IMR-90 (cell line): ENCODE measurements at regions of chr6 and their contacts with region 1.

Region 1: DNA sequence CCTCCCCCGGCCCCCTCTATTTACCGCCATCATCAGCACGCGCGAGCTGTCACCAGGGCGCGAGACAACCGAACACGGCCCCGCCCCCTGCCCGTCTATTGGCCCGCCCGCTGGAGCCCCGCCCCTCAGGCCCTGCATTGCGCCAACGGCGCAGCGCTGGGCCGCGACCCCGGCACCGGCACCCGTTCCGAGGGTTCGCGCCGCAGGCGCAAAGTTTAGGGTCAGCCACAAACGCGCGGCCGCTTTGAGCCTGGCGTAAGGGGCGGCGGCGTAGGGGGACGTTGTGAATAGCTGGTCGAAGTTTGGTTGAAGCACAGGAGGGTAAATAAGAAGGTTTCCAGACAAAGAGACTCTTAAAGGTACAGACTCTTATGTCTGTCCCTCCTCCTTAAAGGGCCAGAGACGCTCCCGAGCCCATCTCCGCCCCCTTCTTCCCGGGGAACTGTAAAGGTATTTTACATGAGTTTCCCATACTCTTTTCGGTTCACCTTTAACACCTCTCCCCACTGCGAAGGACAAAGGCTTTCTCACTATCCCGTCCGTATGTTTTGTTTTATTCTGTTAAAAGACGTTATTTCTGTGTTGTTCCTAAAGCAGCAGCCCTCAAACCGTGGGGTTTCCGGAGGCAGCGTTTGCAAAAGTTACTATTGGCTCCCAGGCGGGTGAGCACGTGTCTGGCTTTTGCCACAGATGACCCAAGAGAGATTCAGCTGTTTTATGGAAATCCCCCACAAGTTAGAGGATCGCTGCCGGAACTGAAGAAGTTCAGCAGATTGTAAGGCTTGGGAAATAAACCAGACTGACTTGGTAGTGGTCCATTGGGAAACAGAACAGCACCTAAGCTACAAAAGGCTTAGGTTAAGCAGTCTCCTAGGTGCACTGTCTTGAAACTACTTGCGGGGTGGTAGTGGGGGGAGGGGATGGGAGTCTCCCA is at the start of gene USP49:
- DNase-seq: peak; percentile 87
- ATAC-seq: peak; percentile 98
- H3K4me3 ChIP-seq: peak within 1 kb of the TSS; percentile 91
- H3K27ac ChIP-seq: peak within 1 kb of the TSS; percentile 86
- H3K4me1 ChIP-seq: peaks cover 2% of the 10 kb centered on the region; the same call in 1 of the 2 replicates
- H3K27me3 ChIP-seq: no peaks in the 10 kb centered on the region
- CTCF ChIP-seq: 0 out of 2 replicates have a peak, but pooled peaks have one; percentile 8
- POLR2A ChIP-seq: peak; percentile 72
- RAD21 ChIP-seq: no peak
- total RNA-seq, gene USP49: 1.4 TPM in 2 replicates

Region 2: DNA sequence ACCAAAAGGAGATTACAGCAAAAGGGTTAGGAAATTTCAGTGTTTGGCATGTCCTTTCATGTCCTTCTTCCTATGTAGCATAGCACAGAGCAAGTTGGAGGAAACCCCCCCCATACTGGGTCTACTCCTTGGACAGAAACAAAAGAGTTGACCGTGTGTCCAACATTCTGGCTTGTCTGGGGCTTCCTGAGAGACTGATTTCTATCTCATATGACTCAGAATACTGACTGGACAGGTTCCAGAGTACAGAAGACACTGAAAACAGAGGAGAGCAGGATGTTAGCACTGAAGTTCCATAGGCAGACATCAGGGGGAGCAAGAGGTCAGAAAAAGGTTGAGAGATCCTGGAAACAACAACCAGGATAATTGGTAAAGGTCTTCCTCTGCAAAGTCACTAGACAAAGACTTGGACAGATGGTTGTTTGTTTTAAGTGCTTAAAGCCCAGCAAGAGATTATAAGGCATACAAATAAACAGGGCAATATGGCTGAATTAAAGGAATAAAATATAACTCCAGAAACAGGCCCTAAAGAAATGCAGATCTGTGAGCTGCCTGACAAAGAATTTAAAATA is 48.8 kb before region 1 on chr6:
- CTCF ChIA-PET with region 1: interaction called, 3 read pairs
- POLR2A ChIA-PET with region 1: no interaction called
- dilution Hi-C with region 1: no loop called
- in situ Hi-C with region 1: no loop called
- intact Hi-C with region 1: loop called (anchors 2 kb)
- DNase-seq: peak; percentile 94
- ATAC-seq: peak; percentile 98
- H3K4me3 ChIP-seq: no peak overlapping the region
- H3K27ac ChIP-seq: peak overlapping the region; percentile 83; the same call in 1 of the 2 replicates
- H3K4me1 ChIP-seq: peaks cover 2% of the 10 kb centered on the region; the same call in 1 of the 2 replicates
- H3K27me3 ChIP-seq: no peaks in the 10 kb centered on the region
- CTCF ChIP-seq: peak; percentile 88
- POLR2A ChIP-seq: no peak
- RAD21 ChIP-seq: peak; percentile 82